Activated CD4-positive, alpha-beta T cell treated with anti-CD3 and anti-CD28 coated beads for 36 hours (primary cell): ENCODE measurements at regions of chr11 and their contacts with region 1.

Region 1: GRCh38 chr11:116454020-116454645 is 318.7 kb downstream of the BUD13 start:
- DNase-seq: peak; percentile 54
- ATAC-seq: no peak
- H3K4me3 Mint-ChIP-seq: no peak overlapping the region
- H3K27ac Mint-ChIP-seq: no peak overlapping the region
- H3K4me1 Mint-ChIP-seq: no peaks in the 10 kb centered on the region
- H3K27me3 Mint-ChIP-seq: peaks cover 14% of the 10 kb centered on the region

Region 2: GRCh38 chr11:116499396-116500003 is 45.4 kb after region 1 on chr11:
- CTCF ChIA-PET with region 1: interaction called, 3 read pairs
- POLR2A ChIA-PET with region 1: no interaction called
- intact Hi-C with region 1: loop called in 1 of 2 experiments (anchors 1 kb)
- DNase-seq: peak; percentile 86
- ATAC-seq: no peak
- H3K4me3 Mint-ChIP-seq: no peak overlapping the region
- H3K27ac Mint-ChIP-seq: no peak overlapping the region
- H3K4me1 Mint-ChIP-seq: no peaks in the 10 kb centered on the region
- H3K27me3 Mint-ChIP-seq: peaks cover 35% of the 10 kb centered on the region

Region 3: GRCh38 chr11:116641561-116642045 is 187.5 kb after region 1 on chr11:
- CTCF ChIA-PET with region 1: no interaction called
- POLR2A ChIA-PET with region 1: no interaction called
- intact Hi-C with region 1: loop called (anchors 1 to 2 kb)
- DNase-seq: peak; percentile 63
- ATAC-seq: no peak
- H3K4me3 Mint-ChIP-seq: no peak overlapping the region
- H3K27ac Mint-ChIP-seq: no peak overlapping the region
- H3K4me1 Mint-ChIP-seq: no peaks in the 10 kb centered on the region
- H3K27me3 Mint-ChIP-seq: peaks cover 3% of the 10 kb centered on the region